Naive thymus-derived CD4-positive, alpha-beta T cell (primary cell): ENCODE measurements at regions of chrX and their contacts with region 1.

Region 1: GRCh38 chrX:72540318-72540717 is 32.3 kb downstream of the HDAC8 start:
- DNase-seq: no peak
- ATAC-seq: no peak
- H3K4me3 ChIP-seq: no peak overlapping the region
- H3K4me3 Mint-ChIP-seq: no peak overlapping the region
- H3K27ac ChIP-seq: no peak overlapping the region
- H3K27ac Mint-ChIP-seq: no peak overlapping the region
- H3K4me1 ChIP-seq: no peaks in the 10 kb centered on the region
- H3K4me1 Mint-ChIP-seq: peaks cover 0 to 5% (median 0%) of the 10 kb centered on the region in 7 donors
- H3K27me3 ChIP-seq: no peaks in the 10 kb centered on the region
- H3K27me3 Mint-ChIP-seq: no peaks in the 10 kb centered on the region

Region 2: DNA sequence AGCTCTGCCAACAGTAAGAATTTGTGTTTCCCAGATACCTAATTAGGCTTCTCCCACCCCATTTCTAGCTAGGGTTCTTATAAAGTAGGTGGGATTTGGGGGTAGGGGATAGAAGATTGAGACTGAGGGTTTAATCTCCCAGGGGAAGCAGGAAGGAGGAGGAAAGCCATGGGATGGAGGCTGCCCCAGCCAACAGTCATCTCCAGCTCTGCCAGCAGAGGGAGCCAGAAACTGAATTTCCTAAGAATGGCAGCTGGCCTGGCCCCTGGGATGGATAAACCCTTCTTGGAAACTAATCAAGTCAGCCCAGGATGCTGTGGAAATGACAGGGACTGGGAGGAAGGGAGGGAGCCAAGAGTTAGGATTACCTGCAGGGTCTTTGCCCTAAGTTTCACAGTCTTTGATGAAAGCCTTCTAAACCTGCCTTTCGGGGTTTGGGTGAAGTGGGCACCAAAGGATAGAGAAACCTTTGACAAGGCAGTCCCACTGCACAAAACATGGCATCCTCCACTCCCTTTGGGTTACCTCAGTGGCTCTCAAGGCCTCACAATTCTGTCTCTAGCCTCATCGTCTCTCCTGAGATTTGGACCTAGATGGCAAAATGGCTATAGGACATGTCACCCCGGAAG is 294.7 kb before region 1 on chrX:
- CTCF ChIA-PET with region 1: no interaction called
- POLR2A ChIA-PET with region 1: no interaction called
- intact Hi-C with region 1: loop called in 1 of 2 experiments (anchors 2 kb)
- DNase-seq: peak in 6 of 9 donors; percentile 5 to 42 (median 18)
- ATAC-seq: no peak
- H3K4me3 ChIP-seq: no peak overlapping the region
- H3K4me3 Mint-ChIP-seq: no peak overlapping the region
- H3K27ac ChIP-seq: no peak overlapping the region
- H3K27ac Mint-ChIP-seq: no peak overlapping the region
- H3K4me1 ChIP-seq: no peaks in the 10 kb centered on the region
- H3K4me1 Mint-ChIP-seq: peaks cover 0 to 2% (median 0%) of the 10 kb centered on the region in 7 donors
- H3K27me3 ChIP-seq: no peaks in the 10 kb centered on the region
- H3K27me3 Mint-ChIP-seq: no peaks in the 10 kb centered on the region